ENCODE measurements at regions of chr16 and their contacts with region 1.

Region 1: GRCh38 chr16:14658063-14658462 is 25.3 kb downstream of the BFAR start:
- DNase-seq: no peak
- ATAC-seq: no peak
- H3K4me3 ChIP-seq: no peak overlapping the region
- H3K27ac ChIP-seq: no peak overlapping the region
- H3K4me1 ChIP-seq: no peaks in the 10 kb centered on the region
- H3K27me3 ChIP-seq: no peaks in the 10 kb centered on the region
- CTCF ChIP-seq: no peak

Region 2: GRCh38 chr16:14325502-14326401 is 332.3 kb before region 1 on chr16:
- CTCF ChIA-PET with region 1: no interaction called
- POLR2A ChIA-PET with region 1: no interaction called
- in situ Hi-C with region 1: no loop called
- intact Hi-C with region 1: no loop called
- DNase-seq: no peak
- ATAC-seq: no peak
- H3K4me3 ChIP-seq: no peak overlapping the region
- H3K27ac ChIP-seq: no peak overlapping the region
- H3K4me1 ChIP-seq: peaks cover 6% of the 10 kb centered on the region; the same call in 1 of the 2 replicates
- H3K27me3 ChIP-seq: no peaks in the 10 kb centered on the region
- CTCF ChIP-seq: no peak

Region 3: DNA sequence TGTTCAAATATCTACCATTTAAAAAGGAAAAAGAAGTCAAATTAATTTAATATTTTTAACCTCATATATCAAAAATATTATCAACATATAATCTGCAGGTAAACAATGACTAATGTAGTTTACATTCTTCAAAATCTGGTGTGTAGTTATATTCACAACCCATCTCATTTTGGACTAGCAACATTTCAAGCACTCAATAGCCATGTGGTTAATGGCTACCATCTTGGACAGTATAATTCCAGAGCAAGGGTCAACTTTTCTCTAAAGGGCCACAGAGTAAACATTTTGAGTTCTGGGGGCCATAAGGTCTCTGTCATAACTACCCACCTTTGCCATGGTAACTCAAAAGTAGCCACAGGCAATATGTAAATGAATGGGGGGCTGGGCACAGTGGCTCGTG is 181.9 kb before region 1 on chr16:
- CTCF ChIA-PET with region 1: no interaction called
- POLR2A ChIA-PET with region 1: interaction called, 12 read pairs
- in situ Hi-C with region 1: no loop called
- intact Hi-C with region 1: no loop called
- DNase-seq: no peak
- ATAC-seq: no peak
- H3K4me3 ChIP-seq: no peak overlapping the region
- H3K27ac ChIP-seq: no peak overlapping the region; the same call in 1 of the 2 replicates
- H3K4me1 ChIP-seq: peaks cover 12% of the 10 kb centered on the region
- H3K27me3 ChIP-seq: no peaks in the 10 kb centered on the region
- CTCF ChIP-seq: no peak

Region 4: DNA sequence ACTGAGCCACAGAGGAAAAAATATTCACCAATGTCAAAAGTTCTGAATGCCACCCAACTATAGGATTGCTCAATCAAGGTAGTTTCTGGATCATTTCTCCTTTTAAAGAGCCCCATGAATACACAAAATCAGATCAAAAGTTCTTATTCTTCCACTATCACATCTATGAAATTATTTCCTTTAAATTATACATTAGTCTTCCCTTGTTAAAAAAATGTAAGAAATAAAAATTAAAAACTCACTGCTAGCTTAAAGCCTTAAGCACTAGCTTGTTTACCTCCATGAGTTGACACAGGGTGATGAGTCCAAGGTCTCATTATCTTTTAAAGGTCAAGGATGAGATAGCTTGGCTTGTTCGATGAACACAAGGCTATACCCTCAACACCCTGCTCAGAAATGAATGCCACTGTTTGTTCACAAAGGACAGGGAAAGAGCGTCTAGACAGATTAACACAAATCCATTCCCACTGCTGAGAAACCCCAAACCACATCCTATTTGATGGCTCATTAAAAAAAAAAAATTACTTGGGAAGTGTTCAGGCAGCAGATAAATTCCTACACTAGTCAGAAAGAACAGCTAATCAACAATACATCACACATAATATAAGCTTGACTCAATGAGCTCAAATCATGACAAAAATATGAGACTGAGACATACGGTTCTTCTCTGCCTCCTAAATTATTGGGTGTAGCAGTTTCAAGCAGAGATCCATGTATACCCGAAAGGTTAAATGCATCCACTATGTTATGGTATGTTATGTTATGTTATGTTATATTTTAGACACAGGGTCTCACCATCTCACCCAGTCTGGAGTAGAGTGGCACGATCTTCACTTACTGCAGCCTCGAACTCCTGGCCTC is 146.9 kb before region 1 on chr16:
- CTCF ChIA-PET with region 1: no interaction called
- POLR2A ChIA-PET with region 1: no interaction called
- in situ Hi-C with region 1: no loop called
- intact Hi-C with region 1: no loop called
- DNase-seq: no peak
- ATAC-seq: no peak
- H3K4me3 ChIP-seq: no peak overlapping the region
- H3K27ac ChIP-seq: no peak overlapping the region
- H3K4me1 ChIP-seq: 0 out of 2 replicates have a peak, but pooled peaks cover under 1% of the 10 kb centered on the region
- H3K27me3 ChIP-seq: no peaks in the 10 kb centered on the region
- CTCF ChIP-seq: no peak

Region 5: DNA sequence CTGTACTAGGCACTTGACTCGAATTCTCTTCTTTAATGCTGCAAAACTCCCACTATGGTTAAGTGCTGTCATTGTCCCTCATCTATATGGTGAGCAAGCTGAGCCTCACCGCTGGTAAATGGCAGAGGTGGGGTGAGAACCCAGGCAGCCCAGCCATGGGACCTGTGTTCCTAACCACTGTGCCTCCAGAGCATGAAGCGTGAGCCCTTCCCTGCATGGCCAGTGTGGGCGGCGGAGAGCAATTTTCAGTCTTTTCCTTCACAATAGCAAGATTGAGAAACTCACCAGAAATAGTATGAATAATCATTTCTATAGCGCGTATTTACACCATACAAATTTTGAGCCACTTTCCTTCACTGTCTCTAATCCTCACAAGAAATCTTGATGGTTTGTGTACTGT is 16.1 kb before region 1 on chr16:
- CTCF ChIA-PET with region 1: interaction called, 3 read pairs
- POLR2A ChIA-PET with region 1: interaction called, 12 read pairs
- in situ Hi-C with region 1: no loop called
- intact Hi-C with region 1: no loop called
- DNase-seq: no peak
- ATAC-seq: peak; percentile 37; the same call in 1 of the 2 replicates
- H3K4me3 ChIP-seq: no peak overlapping the region
- H3K27ac ChIP-seq: no peak overlapping the region
- H3K4me1 ChIP-seq: 0 out of 2 replicates have a peak, but pooled peaks cover 3% of the 10 kb centered on the region
- H3K27me3 ChIP-seq: no peaks in the 10 kb centered on the region
- CTCF ChIP-seq: no peak

Region 6: GRCh38 chr16:14669764-14670163 is 11.7 kb after region 1 on chr16:
- CTCF ChIA-PET with region 1: no interaction called
- POLR2A ChIA-PET with region 1: interaction called, 13 read pairs
- in situ Hi-C with region 1: no loop called
- intact Hi-C with region 1: no loop called
- DNase-seq: no peak
- ATAC-seq: peak; percentile 47
- H3K4me3 ChIP-seq: no peak overlapping the region
- H3K27ac ChIP-seq: no peak overlapping the region
- H3K4me1 ChIP-seq: no peaks in the 10 kb centered on the region
- H3K27me3 ChIP-seq: no peaks in the 10 kb centered on the region
- CTCF ChIP-seq: no peak

Measured in Panc1 (cell line).